ENCODE measurements at regions of chr4 and their contacts with region 1.

Region 1: DNA sequence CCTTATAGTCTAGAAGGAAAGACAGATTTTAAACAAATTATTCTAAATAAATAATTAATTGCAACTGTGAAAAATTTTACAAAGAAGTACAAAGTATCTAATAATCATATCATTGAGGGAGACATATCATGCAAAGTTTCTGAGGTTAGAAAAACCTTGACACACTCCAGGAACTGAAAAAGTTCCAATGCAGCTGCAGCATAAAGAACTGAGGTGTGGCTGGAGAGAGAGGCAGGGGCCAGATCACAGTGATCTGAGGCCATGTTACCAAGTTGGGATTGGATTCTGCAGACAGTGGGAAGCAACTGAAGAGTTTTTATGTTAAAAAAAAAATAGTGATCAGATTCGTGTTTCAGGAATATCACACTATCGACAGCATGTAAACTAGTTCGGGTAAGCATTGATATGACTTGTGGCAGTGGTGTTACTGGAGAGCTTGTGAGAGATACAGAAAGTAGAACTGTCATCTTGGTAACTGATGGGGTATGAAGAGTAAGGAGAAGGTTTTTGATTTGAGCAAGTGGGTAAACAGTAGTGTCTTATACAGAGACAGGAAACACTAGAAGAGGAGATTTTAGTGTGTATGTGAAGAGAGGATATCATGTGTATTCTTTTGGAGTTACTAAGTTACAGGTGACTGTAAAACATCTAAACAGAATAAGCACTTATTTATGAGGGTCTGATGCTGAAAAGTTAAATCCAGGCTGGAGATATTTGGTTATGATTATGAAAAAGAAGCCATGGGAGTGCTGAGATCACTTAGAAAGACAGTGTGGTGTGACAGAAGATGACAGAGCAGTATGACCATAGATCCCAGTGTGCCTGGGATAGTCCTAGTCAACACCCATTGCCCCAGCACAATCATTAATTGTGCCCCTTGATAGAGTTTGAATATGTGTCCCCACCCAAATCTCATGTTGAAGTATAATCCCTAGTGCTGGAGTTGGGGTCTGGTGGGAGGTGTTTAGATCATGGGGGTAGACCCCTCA is 15.6 kb upstream of the SPRY1 start:
- DNase-seq: no peak
- H3K4me3 ChIP-seq: no peak overlapping the region
- H3K27ac ChIP-seq: no peak overlapping the region
- H3K4me1 ChIP-seq: no peaks in the 10 kb centered on the region
- H3K27me3 ChIP-seq: no peaks in the 10 kb centered on the region
- CTCF ChIP-seq: no peak
- EP300 ChIP-seq: no peak
- POLR2A ChIP-seq: no peak

Region 2: DNA sequence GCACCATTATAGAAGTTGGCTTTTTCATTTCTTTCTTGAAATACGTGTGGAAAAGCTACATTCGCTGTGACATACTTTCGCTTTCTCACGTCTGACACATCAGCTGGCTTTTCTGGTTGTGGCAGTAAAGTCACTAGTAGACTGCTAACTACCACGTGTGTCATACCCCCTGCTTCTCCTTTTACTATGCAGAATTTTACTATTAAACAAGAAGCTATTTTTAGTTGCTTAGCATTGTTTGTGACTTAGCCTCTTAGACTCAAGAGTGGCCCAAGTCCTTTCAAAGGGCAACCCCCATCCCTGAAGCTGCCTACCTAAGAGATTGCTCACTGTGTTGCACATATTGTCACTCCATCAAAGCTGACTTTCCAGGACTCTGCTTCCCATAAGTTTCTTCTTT is 922.4 kb before region 1 on chr4:
- in situ Hi-C with region 1: no loop called
- intact Hi-C with region 1: no loop called
- DNase-seq: no peak
- H3K4me3 ChIP-seq: peak overlapping the region in 1 of 4 donors; percentile 25
- H3K27ac ChIP-seq: peak overlapping the region in 2 of 4 donors; percentile 3 to 27
- H3K4me1 ChIP-seq: no peaks in the 10 kb centered on the region
- H3K27me3 ChIP-seq: no peaks in the 10 kb centered on the region
- CTCF ChIP-seq: no peak
- EP300 ChIP-seq: no peak
- POLR2A ChIP-seq: no peak

Region 3: GRCh38 chr4:123217664-123218063 is 163.4 kb before region 1 on chr4:
- in situ Hi-C with region 1: no loop called
- intact Hi-C with region 1: no loop called
- DNase-seq: no peak
- H3K4me3 ChIP-seq: no peak overlapping the region
- H3K27ac ChIP-seq: no peak overlapping the region
- H3K4me1 ChIP-seq: no peaks in the 10 kb centered on the region
- H3K27me3 ChIP-seq: no peaks in the 10 kb centered on the region
- CTCF ChIP-seq: no peak
- EP300 ChIP-seq: no peak
- POLR2A ChIP-seq: no peak

Region 4: DNA sequence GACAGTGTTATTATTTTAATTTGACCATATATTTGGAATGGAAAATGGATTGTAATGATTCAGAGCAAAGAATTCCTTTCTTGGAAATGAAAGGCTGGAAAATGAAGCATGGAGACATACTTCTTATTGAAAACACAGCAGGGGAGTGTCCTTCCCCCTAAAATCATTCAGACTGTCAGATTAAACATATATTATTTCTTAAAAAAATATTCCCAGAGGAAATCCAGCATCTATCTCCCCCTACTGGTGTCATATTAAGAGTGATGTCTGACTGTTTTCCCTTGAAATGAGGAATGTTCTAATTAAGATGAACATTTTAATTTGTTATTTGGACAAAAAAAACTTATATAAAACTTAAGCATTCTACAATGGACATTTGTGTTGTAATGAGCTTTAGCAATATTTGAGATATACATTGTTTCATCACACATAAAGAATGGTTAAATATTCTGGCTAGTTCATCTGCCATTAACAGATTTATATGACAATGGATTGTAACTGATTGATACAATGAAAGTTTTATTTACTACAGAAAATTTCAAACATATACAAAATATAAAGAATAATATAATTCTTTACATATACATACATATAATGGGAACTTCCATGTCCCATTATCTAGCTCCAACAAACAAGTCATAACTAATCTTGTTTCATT is 280.2 kb after region 1 on chr4:
- in situ Hi-C with region 1: loop called in 2 of 4 experiments (anchors 10 kb)
- intact Hi-C with region 1: no loop called
- DNase-seq: no peak
- H3K4me3 ChIP-seq: no peak overlapping the region
- H3K27ac ChIP-seq: no peak overlapping the region
- H3K4me1 ChIP-seq: no peaks in the 10 kb centered on the region
- H3K27me3 ChIP-seq: no peaks in the 10 kb centered on the region
- CTCF ChIP-seq: peak; percentile 51 to 68 (median 63)
- EP300 ChIP-seq: no peak
- POLR2A ChIP-seq: no peak

Region 5: GRCh38 chr4:123750044-123750443 is 369.0 kb after region 1 on chr4:
- in situ Hi-C with region 1: no loop called
- intact Hi-C with region 1: no loop called
- DNase-seq: no peak
- H3K4me3 ChIP-seq: no peak overlapping the region
- H3K27ac ChIP-seq: no peak overlapping the region
- H3K4me1 ChIP-seq: peaks cover 0 to 5% (median 3%) of the 10 kb centered on the region in 4 donors
- H3K27me3 ChIP-seq: no peaks in the 10 kb centered on the region
- CTCF ChIP-seq: no peak
- EP300 ChIP-seq: no peak
- POLR2A ChIP-seq: no peak

Region 6: GRCh38 chr4:124318292-124318691 is 937.3 kb after region 1 on chr4:
- in situ Hi-C with region 1: no loop called
- intact Hi-C with region 1: no loop called
- DNase-seq: no peak
- H3K4me3 ChIP-seq: no peak overlapping the region
- H3K27ac ChIP-seq: no peak overlapping the region
- H3K4me1 ChIP-seq: no peaks in the 10 kb centered on the region
- H3K27me3 ChIP-seq: no peaks in the 10 kb centered on the region
- CTCF ChIP-seq: no peak
- EP300 ChIP-seq: no peak
- POLR2A ChIP-seq: no peak

Measured in transverse colon (tissue), 4 donors.